ENCODE measurements at regions of chr2 and their contacts with region 1.

Region 1: GRCh38 chr2:161384864-161385263 is 31.2 kb upstream of the TBR1 start:
- DNase-seq: peak; percentile 24
- H3K4me3 Mint-ChIP-seq: peak overlapping the region; percentile 45
- H3K27ac Mint-ChIP-seq: no peak overlapping the region
- H3K4me1 Mint-ChIP-seq: peaks cover 31% of the 10 kb centered on the region
- H3K27me3 Mint-ChIP-seq: no peaks in the 10 kb centered on the region

Region 2: DNA sequence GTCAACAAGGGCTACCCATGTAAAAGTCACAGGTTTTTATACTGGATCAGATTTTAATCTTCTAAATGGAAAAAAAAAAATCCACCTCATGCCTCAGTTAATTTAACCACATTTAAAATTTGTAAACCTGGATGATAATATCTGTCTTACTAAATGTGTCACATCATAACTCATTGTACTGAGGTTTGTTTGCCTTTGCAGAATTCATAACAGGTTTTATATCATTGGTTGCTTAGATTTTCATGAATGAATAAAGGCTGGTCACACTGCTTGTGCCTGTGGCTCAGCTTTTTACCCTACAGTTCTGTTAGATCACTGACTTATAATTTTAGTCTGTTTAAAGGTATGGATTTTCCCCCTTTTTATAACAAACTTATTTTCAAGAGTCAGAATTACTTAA is 27.8 kb before region 1 on chr2:
- intact Hi-C with region 1: loop called (anchors 2 kb)
- DNase-seq: no peak
- H3K4me3 Mint-ChIP-seq: no peak overlapping the region
- H3K27ac Mint-ChIP-seq: no peak overlapping the region
- H3K4me1 Mint-ChIP-seq: peaks cover 18% of the 10 kb centered on the region
- H3K27me3 Mint-ChIP-seq: no peaks in the 10 kb centered on the region

Measured in activated T-helper 2 cell treated with anti-CD3 and anti-CD28 coated beads, Interferon-gamma antibody, Interleukin-2, Interleukin-4, amounts not matched to agents 10 μg/mL and 5 μg/mL and 100 μg/mL, durations not matched to agents 14 hours and 24 hours and 36 hours (primary cell).